Gastrocnemius medialis (tissue), 4 donors: ENCODE measurements at regions of chr1 and their contacts with region 1.

Region 1: DNA sequence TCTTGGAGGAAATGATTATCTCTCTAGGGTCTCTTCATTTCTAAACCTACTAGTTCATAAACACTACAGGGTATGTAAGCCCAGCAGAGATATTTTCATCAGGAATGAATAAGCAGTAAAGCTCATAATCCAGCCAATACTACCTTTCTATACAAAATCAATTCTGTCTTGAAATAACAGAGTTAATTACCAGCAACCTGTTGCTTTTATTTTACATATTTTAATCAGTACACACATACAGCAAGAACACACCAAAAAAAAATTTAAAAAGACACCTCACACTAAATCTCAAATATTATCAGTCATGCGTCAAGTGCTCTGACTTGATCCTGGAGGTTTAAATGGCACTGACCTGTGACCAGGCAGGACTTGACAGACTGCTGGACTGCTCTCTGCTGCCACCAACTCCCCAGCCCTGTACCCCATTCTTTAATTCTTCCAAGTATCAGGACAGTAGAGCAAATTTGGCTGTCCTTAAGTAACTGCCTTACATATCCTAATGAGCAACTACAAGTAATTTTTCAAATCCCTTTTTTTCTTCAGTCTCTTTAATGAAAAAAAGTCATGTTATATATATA is 98.5 kb downstream of the CDC42BPA start:
- DNase-seq: no peak
- ATAC-seq: no peak
- H3K4me3 ChIP-seq: no peak overlapping the region
- H3K27ac ChIP-seq: no peak overlapping the region
- H3K4me1 ChIP-seq: peaks cover 0 to 11% of the 10 kb centered on the region in 2 donors
- H3K27me3 ChIP-seq: no peaks in the 10 kb centered on the region
- CTCF ChIP-seq: no peak
- POLR2A ChIP-seq: no peak

Region 2: GRCh38 chr1:227273557-227273956 is 53.8 kb after region 1 on chr1:
- in situ Hi-C with region 1: loop called in 1 of 4 experiments (anchors 10 kb)
- intact Hi-C with region 1: no loop called
- DNase-seq: no peak
- ATAC-seq: no peak
- H3K4me3 ChIP-seq: no peak overlapping the region
- H3K27ac ChIP-seq: no peak overlapping the region
- H3K4me1 ChIP-seq: peaks cover 8 to 18% of the 10 kb centered on the region in 2 donors
- H3K27me3 ChIP-seq: no peaks in the 10 kb centered on the region
- CTCF ChIP-seq: no peak
- POLR2A ChIP-seq: no peak